Activated naive CD4-positive, alpha-beta T cell treated with anti-CD3 and anti-CD28 coated beads for 36 hours (primary cell): ENCODE measurements at regions of chr10 and their contacts with region 1.

Region 1: DNA sequence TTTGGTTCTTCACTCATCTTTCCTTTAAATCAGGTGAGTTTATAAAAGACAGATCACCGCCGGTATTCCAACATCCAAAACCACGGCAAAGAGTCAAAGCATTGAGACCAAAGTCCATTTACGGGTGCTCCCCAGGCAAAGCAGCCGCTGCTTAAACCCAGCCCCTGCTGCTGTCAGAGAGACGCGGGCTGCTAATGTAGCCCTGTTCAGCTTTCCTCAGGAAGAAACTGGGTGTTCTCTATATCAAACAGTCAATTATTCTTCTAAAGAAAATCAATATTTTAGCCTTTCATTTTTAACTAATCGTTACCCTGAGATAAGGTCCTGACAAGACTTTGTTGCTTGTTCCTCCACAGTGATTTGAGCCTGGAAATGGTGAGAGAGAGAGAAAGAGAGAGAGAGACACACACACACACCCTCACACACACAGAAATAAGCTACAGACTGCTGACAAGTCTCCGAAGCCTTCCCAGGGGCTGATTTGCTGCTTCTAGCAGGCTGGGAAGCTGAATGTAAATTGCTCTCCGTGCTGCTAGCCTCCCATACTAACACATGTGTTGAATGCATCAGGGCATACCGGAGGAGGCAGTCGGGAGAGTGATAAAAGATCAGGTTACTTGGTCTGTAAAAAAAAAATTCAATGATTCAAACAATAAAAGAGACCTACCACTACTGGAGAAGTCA is 183.0 kb upstream of the ANK3 start:
- DNase-seq: peak; percentile 44
- H3K4me3 Mint-ChIP-seq: peak overlapping the region; percentile 84
- H3K27ac Mint-ChIP-seq: peak overlapping the region; percentile 94
- H3K4me1 Mint-ChIP-seq: peaks cover 53% of the 10 kb centered on the region
- H3K27me3 Mint-ChIP-seq: no peaks in the 10 kb centered on the region

Region 2: DNA sequence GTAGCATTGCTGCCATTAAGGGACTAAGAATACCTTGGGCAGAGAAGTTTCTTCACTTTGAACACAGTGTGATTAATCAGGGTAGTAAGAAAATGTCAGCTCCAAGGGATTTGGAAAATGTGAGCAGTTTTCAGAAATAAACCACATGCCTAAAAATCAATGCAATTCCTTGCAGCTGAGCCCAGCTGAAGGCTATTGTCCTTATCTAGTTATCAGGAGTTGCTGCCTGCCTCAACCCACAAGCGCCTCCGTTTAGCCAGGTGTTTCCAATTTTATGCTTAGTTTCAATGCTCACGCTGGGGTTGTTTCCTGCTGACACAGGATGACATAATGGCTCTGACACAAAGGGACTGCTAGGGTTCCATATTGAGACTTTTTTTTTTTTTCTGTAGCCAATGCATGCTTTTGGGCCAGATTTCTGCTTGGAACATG is 50.7 kb before region 1 on chr10:
- CTCF ChIA-PET with region 1: no interaction called
- intact Hi-C with region 1: no loop called
- DNase-seq: peak; percentile 14
- H3K4me3 Mint-ChIP-seq: no peak overlapping the region
- H3K27ac Mint-ChIP-seq: no peak overlapping the region
- H3K4me1 Mint-ChIP-seq: peaks cover 6% of the 10 kb centered on the region
- H3K27me3 Mint-ChIP-seq: no peaks in the 10 kb centered on the region

Region 3: DNA sequence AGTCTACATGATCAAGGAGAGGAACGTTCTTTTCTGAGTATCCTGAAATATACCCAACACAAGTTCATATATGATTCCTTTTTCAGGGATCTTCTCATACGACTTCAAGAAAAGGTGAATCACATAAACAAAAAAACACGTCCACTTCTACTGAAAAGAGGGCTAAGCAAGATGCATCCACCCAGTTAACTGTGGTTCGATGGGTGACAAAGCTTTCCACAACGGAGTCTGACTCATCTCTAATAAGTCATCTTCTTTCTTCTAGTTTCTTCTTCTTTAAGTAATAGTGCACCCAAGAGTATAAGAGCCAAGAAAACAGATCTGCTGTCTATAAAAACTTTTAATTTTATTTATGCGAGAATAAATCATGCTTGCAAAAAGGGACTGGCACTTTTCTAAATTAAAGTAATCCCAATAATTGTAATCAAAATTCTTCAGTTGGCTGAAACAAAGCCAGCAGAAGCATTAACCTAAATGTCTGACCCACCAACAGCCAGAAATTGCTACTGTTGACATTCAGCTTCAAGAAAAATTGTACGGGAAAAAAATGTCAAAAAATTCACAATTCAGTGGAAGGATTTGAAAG is 36.0 kb before region 1 on chr10:
- CTCF ChIA-PET with region 1: no interaction called
- intact Hi-C with region 1: loop called (anchors 1 kb)
- DNase-seq: peak; percentile 38
- H3K4me3 Mint-ChIP-seq: no peak overlapping the region
- H3K27ac Mint-ChIP-seq: no peak overlapping the region
- H3K4me1 Mint-ChIP-seq: peaks cover 34% of the 10 kb centered on the region
- H3K27me3 Mint-ChIP-seq: no peaks in the 10 kb centered on the region

Region 4: GRCh38 chr10:60611291-60611747 is 38.7 kb after region 1 on chr10:
- CTCF ChIA-PET with region 1: no interaction called
- intact Hi-C with region 1: loop called (anchors 1 kb)
- DNase-seq: peak; percentile 17
- H3K4me3 Mint-ChIP-seq: no peak overlapping the region
- H3K27ac Mint-ChIP-seq: peak overlapping the region; percentile 34
- H3K4me1 Mint-ChIP-seq: peaks cover 21% of the 10 kb centered on the region
- H3K27me3 Mint-ChIP-seq: no peaks in the 10 kb centered on the region

Region 5: GRCh38 chr10:60728056-60728455 is 155.4 kb after region 1 on chr10:
- CTCF ChIA-PET with region 1: no interaction called
- intact Hi-C with region 1: loop called (anchors 1 kb)
- DNase-seq: no peak
- H3K4me3 Mint-ChIP-seq: peak overlapping the region; percentile 71
- H3K27ac Mint-ChIP-seq: peak overlapping the region; percentile 91
- H3K4me1 Mint-ChIP-seq: peaks cover 60% of the 10 kb centered on the region
- H3K27me3 Mint-ChIP-seq: peaks cover 2% of the 10 kb centered on the region